Prostate gland (tissue), 2 donors: ENCODE measurements at regions of chr17 and their contacts with region 1.

Region 1: GRCh38 chr17:77208217-77208808 is 67.5 kb downstream of the SEC14L1 start:
- DNase-seq: peak; percentile 36
- H3K4me3 ChIP-seq: no peak overlapping the region
- H3K27ac ChIP-seq: peak overlapping the region in 1 of 2 donors; percentile 44
- H3K4me1 ChIP-seq: peaks cover 6% of the 10 kb centered on the region
- H3K27me3 ChIP-seq: no peaks in the 10 kb centered on the region
- CTCF ChIP-seq: peak in 2 of 4 experiments; percentile 49 to 52
- POLR2A ChIP-seq: no peak

Region 2: DNA sequence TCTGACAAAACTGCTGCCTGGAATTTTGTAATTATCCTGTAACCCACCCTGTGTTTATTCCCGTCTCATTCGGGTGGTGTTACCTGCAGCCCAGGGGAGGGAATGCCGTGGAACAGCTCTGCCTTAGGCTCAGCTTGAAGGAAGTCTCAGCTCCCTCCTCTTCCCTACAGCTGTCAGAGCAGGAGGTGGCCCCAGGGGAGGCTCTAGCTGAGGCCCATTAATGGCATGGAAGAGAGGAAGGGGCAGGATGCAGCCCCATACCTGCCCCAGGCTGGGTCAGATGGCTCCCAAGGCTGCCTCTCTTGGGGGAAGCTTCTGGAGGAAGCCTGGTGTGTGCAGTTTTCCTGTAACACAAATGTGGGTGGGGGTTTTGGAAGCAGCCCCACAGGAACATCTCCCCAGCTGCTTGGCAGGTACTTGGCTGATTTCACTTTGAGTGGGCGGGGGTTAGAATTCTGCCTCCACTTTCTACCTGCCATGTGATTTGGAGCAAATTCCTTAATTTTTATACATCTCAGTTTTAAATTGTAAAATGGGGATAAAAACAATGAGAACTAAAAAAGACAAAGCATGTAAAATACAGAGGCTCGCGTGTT is 236.2 kb before region 1 on chr17:
- intact Hi-C with region 1: no loop called
- DNase-seq: no peak
- H3K4me3 ChIP-seq: no peak overlapping the region
- H3K27ac ChIP-seq: no peak overlapping the region
- H3K4me1 ChIP-seq: no peaks in the 10 kb centered on the region
- H3K27me3 ChIP-seq: peaks cover 9% of the 10 kb centered on the region
- CTCF ChIP-seq: no peak
- POLR2A ChIP-seq: no peak

Region 3: GRCh38 chr17:77145612-77146245 is 62.6 kb before region 1 on chr17:
- intact Hi-C with region 1: loop called (anchors 5 kb)
- DNase-seq: peak; percentile 30
- H3K4me3 ChIP-seq: no peak overlapping the region
- H3K27ac ChIP-seq: peak overlapping the region; percentile 41 to 98
- H3K4me1 ChIP-seq: peaks cover 8% of the 10 kb centered on the region
- H3K27me3 ChIP-seq: no peaks in the 10 kb centered on the region
- CTCF ChIP-seq: peak in 1 of 4 experiments; percentile 8
- POLR2A ChIP-seq: no peak

Region 4: GRCh38 chr17:77189148-77189547 is 19.2 kb before region 1 on chr17:
- intact Hi-C with region 1: no loop called
- DNase-seq: no peak
- H3K4me3 ChIP-seq: no peak overlapping the region
- H3K27ac ChIP-seq: no peak overlapping the region
- H3K4me1 ChIP-seq: peaks cover 6% of the 10 kb centered on the region
- H3K27me3 ChIP-seq: no peaks in the 10 kb centered on the region
- CTCF ChIP-seq: no peak
- POLR2A ChIP-seq: no peak

Region 5: GRCh38 chr17:77247048-77247541 is 38.8 kb after region 1 on chr17:
- intact Hi-C with region 1: loop called (anchors 5 kb)
- DNase-seq: peak; percentile 72
- H3K4me3 ChIP-seq: peak overlapping the region; percentile 50 to 51
- H3K27ac ChIP-seq: peak overlapping the region; percentile 16 to 51
- H3K4me1 ChIP-seq: peaks cover 3% of the 10 kb centered on the region
- H3K27me3 ChIP-seq: no peaks in the 10 kb centered on the region
- CTCF ChIP-seq: peak; percentile 96 to 99 (median 98)
- POLR2A ChIP-seq: no peak